CD8-positive, alpha-beta memory T cell (primary cell): ENCODE measurements at regions of chr10 and their contacts with region 1.

Region 1: GRCh38 chr10:74460812-74461211 is 309.8 kb downstream of the ADK start:
- DNase-seq: no peak
- H3K4me3 ChIP-seq: no peak overlapping the region
- H3K4me3 Mint-ChIP-seq: no peak overlapping the region
- H3K27ac ChIP-seq: no peak overlapping the region
- H3K27ac Mint-ChIP-seq: peak overlapping the region in 2 of 8 donors; percentile 20 to 22
- H3K4me1 ChIP-seq: no peaks in the 10 kb centered on the region
- H3K4me1 Mint-ChIP-seq: peaks cover 0 to 10% (median 0%) of the 10 kb centered on the region in 3 donors
- H3K27me3 ChIP-seq: no peaks in the 10 kb centered on the region
- H3K27me3 Mint-ChIP-seq: no peaks in the 10 kb centered on the region

Region 2: GRCh38 chr10:74432841-74433594 is 27.8 kb before region 1 on chr10:
- CTCF ChIA-PET with region 1: no interaction called
- POLR2A ChIA-PET with region 1: no interaction called
- DNase-seq: no peak
- H3K4me3 ChIP-seq: no peak overlapping the region
- H3K4me3 Mint-ChIP-seq: no peak overlapping the region
- H3K27ac ChIP-seq: no peak overlapping the region
- H3K27ac Mint-ChIP-seq: peak overlapping the region in 1 of 8 donors; percentile 5
- H3K4me1 ChIP-seq: no peaks in the 10 kb centered on the region
- H3K4me1 Mint-ChIP-seq: peaks cover 0 to 2% (median 0%) of the 10 kb centered on the region in 3 donors
- H3K27me3 ChIP-seq: no peaks in the 10 kb centered on the region
- H3K27me3 Mint-ChIP-seq: no peaks in the 10 kb centered on the region

Region 3: GRCh38 chr10:74445493-74445892 is 15.3 kb before region 1 on chr10:
- CTCF ChIA-PET with region 1: no interaction called
- POLR2A ChIA-PET with region 1: no interaction called
- DNase-seq: peak in 1 of 5 donors; percentile 2
- H3K4me3 ChIP-seq: no peak overlapping the region
- H3K4me3 Mint-ChIP-seq: no peak overlapping the region
- H3K27ac ChIP-seq: no peak overlapping the region
- H3K27ac Mint-ChIP-seq: no peak overlapping the region
- H3K4me1 ChIP-seq: no peaks in the 10 kb centered on the region
- H3K4me1 Mint-ChIP-seq: peaks cover 7 to 23% (median 14%) of the 10 kb centered on the region in 3 donors
- H3K27me3 ChIP-seq: no peaks in the 10 kb centered on the region
- H3K27me3 Mint-ChIP-seq: no peaks in the 10 kb centered on the region

Region 4: GRCh38 chr10:75028049-75028448 is 567.2 kb after region 1 on chr10:
- CTCF ChIA-PET with region 1: no interaction called
- POLR2A ChIA-PET with region 1: interaction called, 10 read pairs
- DNase-seq: no peak
- H3K4me3 ChIP-seq: no peak overlapping the region
- H3K4me3 Mint-ChIP-seq: no peak overlapping the region
- H3K27ac ChIP-seq: no peak overlapping the region
- H3K27ac Mint-ChIP-seq: peak overlapping the region in 1 of 8 donors; percentile 64
- H3K4me1 ChIP-seq: no peaks in the 10 kb centered on the region
- H3K4me1 Mint-ChIP-seq: peaks cover 0 to under 1% (median 0%) of the 10 kb centered on the region in 3 donors
- H3K27me3 ChIP-seq: no peaks in the 10 kb centered on the region
- H3K27me3 Mint-ChIP-seq: no peaks in the 10 kb centered on the region